Calu3 (cell line): ENCODE measurements at regions of chr11 and their contacts with region 1.

Region 1: GRCh38 chr11:73931039-73931645 is 19.7 kb upstream of the DNAJB13 start:
- DNase-seq: peak; percentile 42
- H3K4me3 Mint-ChIP-seq: no peak overlapping the region
- H3K27ac Mint-ChIP-seq: no peak overlapping the region
- H3K4me1 Mint-ChIP-seq: no peaks in the 10 kb centered on the region
- H3K27me3 Mint-ChIP-seq: no peaks in the 10 kb centered on the region
- CTCF ChIP-seq: peak; percentile 27

Region 2: GRCh38 chr11:73950869-73951710 is 19.9 kb after region 1 on chr11 and contains the start of gene DNAJB13:
- CTCF ChIA-PET with region 1: interaction called, 5 read pairs
- intact Hi-C with region 1: loop called (anchors 1 kb)
- DNase-seq: peak; percentile 65
- H3K4me3 Mint-ChIP-seq: no peak within 1 kb of the TSS
- H3K27ac Mint-ChIP-seq: peak within 1 kb of the TSS; percentile 24
- H3K4me1 Mint-ChIP-seq: peaks cover 32% of the 10 kb centered on the region
- H3K27me3 Mint-ChIP-seq: no peaks in the 10 kb centered on the region
- CTCF ChIP-seq: no peak
- total RNA-seq, gene DNAJB13: 0.50 and 1.1 TPM in 2 replicates